ENCODE measurements at regions of chr19 and their contacts with region 1.

Region 1: DNA sequence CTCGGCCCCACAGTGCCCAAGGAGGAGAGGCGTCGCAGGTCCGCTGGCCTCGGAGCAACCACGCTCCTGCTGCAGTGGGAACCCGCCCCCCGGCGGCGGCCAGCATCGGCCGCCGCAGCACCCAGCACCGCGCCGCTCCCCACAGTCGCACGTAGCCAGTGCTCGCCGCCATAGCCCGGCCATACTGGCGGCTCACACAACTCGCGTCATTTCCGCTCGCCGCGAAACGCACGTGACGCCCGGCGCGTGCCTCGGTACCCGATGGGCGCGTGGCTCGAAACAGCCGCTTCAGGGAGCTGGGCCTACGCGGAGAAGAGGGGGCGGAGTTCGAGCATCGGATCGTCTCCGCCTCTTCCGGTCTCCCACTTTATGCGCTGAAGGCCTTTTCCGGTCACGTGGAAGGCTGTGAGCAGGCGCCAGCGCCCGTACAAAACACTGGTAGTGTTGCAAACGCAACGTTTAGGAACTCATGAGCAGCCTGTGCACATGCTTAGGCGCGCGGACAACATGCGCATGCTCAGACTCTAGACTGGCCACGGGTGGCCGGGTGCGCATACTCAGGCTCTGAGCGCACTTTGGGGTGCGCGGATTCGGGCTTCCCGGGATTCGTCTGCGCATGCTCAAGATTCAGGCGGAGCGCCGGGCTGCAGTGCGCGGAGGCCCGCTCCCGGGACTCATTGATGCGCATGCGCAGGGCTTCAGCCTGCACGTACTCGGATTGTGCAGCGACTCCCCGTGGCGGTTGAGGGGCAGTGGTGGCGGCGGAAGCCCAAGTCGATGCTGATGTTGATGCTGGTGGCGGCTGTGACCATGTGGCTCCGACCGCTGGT is at the starts of genes CATSPERD and LONP1:
- DNase-seq: peak; percentile 97
- H3K4me3 ChIP-seq: peak within 1 kb of the TSS; percentile 98
- H3K4me3 Mint-ChIP-seq: peak within 1 kb of the TSS; percentile 84
- H3K27ac Mint-ChIP-seq: peak within 1 kb of the TSS; percentile 93
- H3K4me1 ChIP-seq: no peaks in the 10 kb centered on the region
- H3K4me1 Mint-ChIP-seq: no peaks in the 10 kb centered on the region
- H3K27me3 ChIP-seq: no peaks in the 10 kb centered on the region
- H3K27me3 Mint-ChIP-seq: no peaks in the 10 kb centered on the region
- CTCF ChIP-seq: peak; percentile 77 to 88
- total RNA-seq, gene CATSPERD: not detected in 2 replicates
- total RNA-seq, gene LONP1: 174 and 208 TPM in 2 replicates

Region 2: GRCh38 chr19:5655412-5655811 is 64.8 kb before region 1 on chr19:
- CTCF ChIA-PET with region 1: no interaction called
- POLR2A ChIA-PET with region 1: interaction called, 14 read pairs
- intact Hi-C with region 1: no loop called
- DNase-seq: no peak
- H3K4me3 ChIP-seq: no peak overlapping the region
- H3K4me3 Mint-ChIP-seq: no peak overlapping the region
- H3K27ac Mint-ChIP-seq: no peak overlapping the region
- H3K4me1 ChIP-seq: no peaks in the 10 kb centered on the region
- H3K4me1 Mint-ChIP-seq: no peaks in the 10 kb centered on the region
- H3K27me3 ChIP-seq: no peaks in the 10 kb centered on the region
- H3K27me3 Mint-ChIP-seq: no peaks in the 10 kb centered on the region
- CTCF ChIP-seq: no peak

Region 3: GRCh38 chr19:5690125-5690954 is 29.8 kb before region 1 on chr19 and contains the start of gene RPL36:
- CTCF ChIA-PET with region 1: interaction called, 8 read pairs
- POLR2A ChIA-PET with region 1: interaction called, 24 read pairs
- intact Hi-C with region 1: no loop called
- DNase-seq: peak; percentile 96 to 98
- H3K4me3 ChIP-seq: peak within 1 kb of the TSS; percentile 90
- H3K4me3 Mint-ChIP-seq: peak within 1 kb of the TSS; percentile 99
- H3K27ac Mint-ChIP-seq: peak within 1 kb of the TSS; percentile 97
- H3K4me1 ChIP-seq: no peaks in the 10 kb centered on the region
- H3K4me1 Mint-ChIP-seq: no peaks in the 10 kb centered on the region
- H3K27me3 ChIP-seq: no peaks in the 10 kb centered on the region
- H3K27me3 Mint-ChIP-seq: no peaks in the 10 kb centered on the region
- CTCF ChIP-seq: peak; percentile 84 to 89
- total RNA-seq, gene RPL36: 951 and 1,003 TPM in 2 replicates

Region 4: GRCh38 chr19:5775668-5776309 is 55.6 kb after region 1 on chr19:
- CTCF ChIA-PET with region 1: interaction called, 6 read pairs
- POLR2A ChIA-PET with region 1: interaction called, 18 read pairs
- intact Hi-C with region 1: no loop called
- DNase-seq: no peak
- H3K4me3 ChIP-seq: no peak overlapping the region
- H3K4me3 Mint-ChIP-seq: no peak overlapping the region
- H3K27ac Mint-ChIP-seq: no peak overlapping the region
- H3K4me1 ChIP-seq: no peaks in the 10 kb centered on the region
- H3K4me1 Mint-ChIP-seq: no peaks in the 10 kb centered on the region
- H3K27me3 ChIP-seq: no peaks in the 10 kb centered on the region
- H3K27me3 Mint-ChIP-seq: no peaks in the 10 kb centered on the region
- CTCF ChIP-seq: no peak

Region 5: GRCh38 chr19:5790573-5791520 is 70.7 kb after region 1 on chr19 and contains the start of gene DUS3L:
- CTCF ChIA-PET with region 1: no interaction called
- POLR2A ChIA-PET with region 1: no interaction called
- intact Hi-C with region 1: loop called (anchors 5 kb)
- DNase-seq: peak; percentile 96 to 98
- H3K4me3 ChIP-seq: peak within 1 kb of the TSS; percentile 86
- H3K4me3 Mint-ChIP-seq: peak within 1 kb of the TSS; percentile 98
- H3K27ac Mint-ChIP-seq: peak within 1 kb of the TSS; percentile 100
- H3K4me1 ChIP-seq: no peaks in the 10 kb centered on the region
- H3K4me1 Mint-ChIP-seq: no peaks in the 10 kb centered on the region
- H3K27me3 ChIP-seq: no peaks in the 10 kb centered on the region
- H3K27me3 Mint-ChIP-seq: no peaks in the 10 kb centered on the region
- CTCF ChIP-seq: no peak
- total RNA-seq, gene DUS3L: 73.3 and 75.4 TPM in 2 replicates

Region 6: GRCh38 chr19:6056801-6057650 is 336.9 kb after region 1 on chr19:
- CTCF ChIA-PET with region 1: no interaction called
- POLR2A ChIA-PET with region 1: no interaction called
- intact Hi-C with region 1: no loop called
- DNase-seq: peak; percentile 42 to 48
- H3K4me3 ChIP-seq: no peak overlapping the region
- H3K4me3 Mint-ChIP-seq: no peak overlapping the region
- H3K27ac Mint-ChIP-seq: peak overlapping the region; percentile 80
- H3K4me1 ChIP-seq: peaks cover 33% of the 10 kb centered on the region
- H3K4me1 Mint-ChIP-seq: peaks cover 31% of the 10 kb centered on the region
- H3K27me3 ChIP-seq: no peaks in the 10 kb centered on the region
- H3K27me3 Mint-ChIP-seq: no peaks in the 10 kb centered on the region
- CTCF ChIP-seq: no peak